ENCODE measurements at regions of chr1 and their contacts with region 1.

Region 1: DNA sequence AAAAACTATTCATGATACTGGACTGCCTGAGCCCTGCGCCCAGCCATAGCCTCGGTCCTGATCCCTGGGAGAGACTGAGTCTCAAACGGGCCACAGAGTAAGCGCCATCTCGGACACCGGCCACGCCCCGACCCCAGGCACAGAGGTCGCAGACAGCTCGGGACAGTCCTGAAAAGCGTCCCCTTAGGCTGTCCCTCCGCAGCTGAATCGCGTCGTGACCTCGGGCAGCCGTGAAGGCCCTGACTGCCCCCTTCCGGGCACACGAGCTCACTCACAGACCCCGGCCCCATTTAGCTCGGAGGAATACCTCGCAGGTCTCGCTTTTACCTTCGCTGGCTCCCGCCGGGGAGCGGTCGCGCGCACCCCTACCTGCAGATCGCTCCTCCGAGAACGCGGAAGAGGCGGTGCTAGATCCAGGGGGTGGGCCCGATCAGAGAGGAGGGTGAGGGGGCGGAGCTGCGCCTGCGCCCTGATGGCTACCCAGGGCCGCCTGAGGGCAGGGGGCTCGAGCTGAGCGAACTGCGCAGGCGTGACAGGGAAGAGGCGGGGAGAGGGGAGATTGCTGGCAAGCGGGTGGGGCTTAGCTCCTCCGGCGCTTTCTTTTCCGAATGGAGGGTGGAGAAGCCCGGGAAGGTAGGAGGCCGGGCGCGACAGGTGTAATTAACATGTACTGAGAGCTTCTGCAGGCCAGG is at the start of gene MKNK1:
- DNase-seq: peak; percentile 96 to 99 (median 99)
- ATAC-seq: peak; percentile 99
- H3K4me3 ChIP-seq: peak within 1 kb of the TSS; percentile 86
- H3K4me3 Mint-ChIP-seq: peak within 1 kb of the TSS; percentile 89 to 99 (median 94)
- H3K27ac ChIP-seq: peak within 1 kb of the TSS; percentile 75
- H3K27ac Mint-ChIP-seq: peak within 1 kb of the TSS; percentile 81 to 96 (median 93)
- H3K4me1 ChIP-seq: peaks cover 22 to 38% of the 10 kb centered on the region in 2 donors
- H3K4me1 Mint-ChIP-seq: peaks cover 53 to 76% (median 59%) of the 10 kb centered on the region in 7 donors
- H3K27me3 ChIP-seq: no peaks in the 10 kb centered on the region
- H3K27me3 Mint-ChIP-seq: no peaks in the 10 kb centered on the region
- total RNA-seq, gene MKNK1: 35.8 to 80.1 (median 54.1) TPM

Region 2: GRCh38 chr1:46247436-46248121 is 356.4 kb before region 1 on chr1 and contains the start of gene RAD54L:
- CTCF ChIA-PET with region 1: no interaction called
- POLR2A ChIA-PET with region 1: no interaction called
- intact Hi-C with region 1: loop called (anchors 1 to 5 kb)
- DNase-seq: peak; percentile 83 to 97 (median 95)
- ATAC-seq: peak; percentile 99
- H3K4me3 ChIP-seq: peak within 1 kb of the TSS; percentile 89
- H3K4me3 Mint-ChIP-seq: peak within 1 kb of the TSS; percentile 86 to 100 (median 94)
- H3K27ac ChIP-seq: peak within 1 kb of the TSS; percentile 66
- H3K27ac Mint-ChIP-seq: peak within 1 kb of the TSS; percentile 62 to 96 (median 78)
- H3K4me1 ChIP-seq: peaks cover 4 to 8% of the 10 kb centered on the region in 2 donors
- H3K4me1 Mint-ChIP-seq: peaks cover 0 to 41% (median 17%) of the 10 kb centered on the region in 7 donors
- H3K27me3 ChIP-seq: no peaks in the 10 kb centered on the region
- H3K27me3 Mint-ChIP-seq: no peaks in the 10 kb centered on the region
- total RNA-seq, gene RAD54L: 0.94 to 31.9 (median 2.1) TPM

Region 3: GRCh38 chr1:46413596-46413985 is 190.4 kb before region 1 on chr1:
- CTCF ChIA-PET with region 1: no interaction called
- POLR2A ChIA-PET with region 1: no interaction called
- intact Hi-C with region 1: no loop called
- DNase-seq: no peak
- ATAC-seq: peak; percentile 80
- H3K4me3 ChIP-seq: no peak overlapping the region
- H3K4me3 Mint-ChIP-seq: no peak overlapping the region
- H3K27ac ChIP-seq: no peak overlapping the region
- H3K27ac Mint-ChIP-seq: no peak overlapping the region
- H3K4me1 ChIP-seq: no peaks in the 10 kb centered on the region
- H3K4me1 Mint-ChIP-seq: no peaks in the 10 kb centered on the region
- H3K27me3 ChIP-seq: no peaks in the 10 kb centered on the region
- H3K27me3 Mint-ChIP-seq: no peaks in the 10 kb centered on the region

Region 4: DNA sequence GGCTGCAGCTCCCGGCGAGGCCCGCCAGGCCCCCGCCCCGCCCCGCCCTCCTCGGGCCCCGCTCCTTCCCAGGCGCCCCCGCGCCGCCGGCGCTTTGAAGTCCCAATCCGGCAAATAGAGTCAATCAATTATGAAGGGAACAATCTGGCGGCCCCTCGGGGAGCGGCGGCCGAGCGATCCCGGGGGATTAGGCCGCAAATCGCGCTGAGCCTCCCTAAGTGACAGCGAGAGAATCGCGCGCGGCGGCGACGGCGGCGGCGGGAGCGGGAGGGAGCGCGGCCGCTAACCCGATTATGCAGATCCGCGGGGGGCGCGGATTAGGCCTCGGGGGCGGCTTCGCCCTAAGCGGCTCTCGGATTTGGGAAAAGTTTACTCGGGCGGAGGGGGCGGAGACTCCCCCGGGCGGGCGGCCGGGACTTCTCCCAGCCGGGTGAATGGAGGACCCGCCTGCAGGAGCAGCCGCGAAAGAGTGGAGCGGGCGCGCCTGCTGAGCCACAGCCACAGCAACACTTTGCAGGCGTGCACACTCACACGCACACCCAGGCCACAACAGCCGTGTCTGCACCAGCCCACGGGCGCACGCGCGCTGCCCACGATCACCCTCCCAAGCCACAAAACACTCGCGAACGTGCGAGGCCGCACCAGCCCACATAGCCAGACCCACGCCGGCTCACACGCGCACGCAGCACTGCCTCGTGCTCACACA is 137.4 kb before region 1 on chr1:
- CTCF ChIA-PET with region 1: no interaction called
- POLR2A ChIA-PET with region 1: no interaction called
- intact Hi-C with region 1: no loop called
- DNase-seq: peak in 1 of 9 donors; percentile 7
- ATAC-seq: peak; percentile 33
- H3K4me3 ChIP-seq: peak overlapping the region; percentile 16
- H3K4me3 Mint-ChIP-seq: peak overlapping the region; percentile 58 to 84 (median 79)
- H3K27ac ChIP-seq: no peak overlapping the region
- H3K27ac Mint-ChIP-seq: no peak overlapping the region
- H3K4me1 ChIP-seq: peaks cover 0 to 5% of the 10 kb centered on the region in 2 donors
- H3K4me1 Mint-ChIP-seq: peaks cover 6 to 14% (median 10%) of the 10 kb centered on the region in 7 donors
- H3K27me3 ChIP-seq: no peaks in the 10 kb centered on the region
- H3K27me3 Mint-ChIP-seq: peaks cover 33 to 76% (median 55%) of the 10 kb centered on the region in 5 donors

Region 5: GRCh38 chr1:46527474-46528296 is 76.3 kb before region 1 on chr1:
- CTCF ChIA-PET with region 1: no interaction called
- POLR2A ChIA-PET with region 1: interaction called, 10 read pairs
- intact Hi-C with region 1: loop called in 1 of 2 experiments (anchors 5 kb)
- DNase-seq: peak; percentile 34 to 81 (median 57)
- ATAC-seq: peak; percentile 79
- H3K4me3 ChIP-seq: no peak overlapping the region
- H3K4me3 Mint-ChIP-seq: peak overlapping the region in 1 of 10 donors; percentile 34
- H3K27ac ChIP-seq: no peak overlapping the region
- H3K27ac Mint-ChIP-seq: peak overlapping the region in 1 of 9 donors; percentile 34
- H3K4me1 ChIP-seq: peaks cover 3 to 5% of the 10 kb centered on the region in 2 donors
- H3K4me1 Mint-ChIP-seq: peaks cover 0 to 20% (median 6%) of the 10 kb centered on the region in 7 donors
- H3K27me3 ChIP-seq: no peaks in the 10 kb centered on the region
- H3K27me3 Mint-ChIP-seq: peaks cover 16 to 35% (median 31%) of the 10 kb centered on the region in 5 donors

Region 6: DNA sequence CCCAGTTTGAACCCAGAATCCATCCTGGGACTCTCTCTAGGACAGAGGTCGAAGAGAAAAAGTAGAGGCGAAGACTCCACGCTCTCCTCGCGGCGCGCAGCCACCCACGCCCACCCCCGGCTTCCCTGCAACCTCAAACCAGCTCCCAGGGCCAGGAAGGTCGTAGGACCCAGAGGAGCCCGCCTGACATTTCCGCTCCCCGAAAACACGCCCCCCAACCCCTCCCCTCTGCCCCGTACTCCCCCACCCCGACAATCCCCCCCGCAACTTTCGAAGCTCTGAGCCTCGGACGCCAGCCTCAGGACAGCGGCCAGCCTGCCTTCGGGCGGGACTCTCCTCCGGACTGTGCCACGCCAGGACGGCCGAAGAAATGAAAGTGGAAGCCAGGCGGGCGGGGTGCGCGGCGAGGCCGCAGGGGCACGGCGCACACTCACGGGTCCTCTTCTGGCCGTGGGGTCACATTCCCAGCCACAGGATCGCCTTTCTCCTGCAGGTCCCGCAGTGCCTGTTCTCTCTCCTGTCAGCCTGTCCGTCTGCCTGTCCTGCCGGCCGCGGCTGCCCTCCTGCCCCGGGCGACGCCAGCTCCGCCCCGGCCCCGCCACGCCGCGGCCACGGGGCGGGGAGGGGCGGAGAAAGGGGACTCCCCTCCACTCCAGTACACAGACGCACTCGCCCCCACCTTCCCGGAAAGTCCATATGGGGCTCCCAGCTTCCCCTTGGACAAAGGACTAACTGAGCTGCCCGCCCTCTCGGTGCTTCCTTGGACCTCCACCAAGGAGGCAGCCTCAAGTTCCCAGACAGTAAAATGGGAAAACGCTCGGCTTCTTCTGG is 12.5 kb after region 1 on chr1 and contains the start of gene MOB3C:
- CTCF ChIA-PET with region 1: interaction called, 6 read pairs
- POLR2A ChIA-PET with region 1: interaction called, 110 read pairs
- intact Hi-C with region 1: loop called (anchors 1 kb)
- DNase-seq: peak; percentile 41 to 79 (median 62)
- ATAC-seq: peak; percentile 83
- H3K4me3 ChIP-seq: peak within 1 kb of the TSS; percentile 74
- H3K4me3 Mint-ChIP-seq: peak within 1 kb of the TSS; percentile 90 to 96 (median 93)
- H3K27ac ChIP-seq: peak within 1 kb of the TSS; percentile 94
- H3K27ac Mint-ChIP-seq: peak within 1 kb of the TSS; percentile 88 to 96 (median 93)
- H3K4me1 ChIP-seq: peaks cover 31 to 34% of the 10 kb centered on the region in 2 donors
- H3K4me1 Mint-ChIP-seq: peaks cover 14 to 68% (median 51%) of the 10 kb centered on the region in 7 donors
- H3K27me3 ChIP-seq: no peaks in the 10 kb centered on the region
- H3K27me3 Mint-ChIP-seq: no peaks in the 10 kb centered on the region
- total RNA-seq, gene MOB3C: 12.1 to 25.8 (median 25.2) TPM

Region 7: DNA sequence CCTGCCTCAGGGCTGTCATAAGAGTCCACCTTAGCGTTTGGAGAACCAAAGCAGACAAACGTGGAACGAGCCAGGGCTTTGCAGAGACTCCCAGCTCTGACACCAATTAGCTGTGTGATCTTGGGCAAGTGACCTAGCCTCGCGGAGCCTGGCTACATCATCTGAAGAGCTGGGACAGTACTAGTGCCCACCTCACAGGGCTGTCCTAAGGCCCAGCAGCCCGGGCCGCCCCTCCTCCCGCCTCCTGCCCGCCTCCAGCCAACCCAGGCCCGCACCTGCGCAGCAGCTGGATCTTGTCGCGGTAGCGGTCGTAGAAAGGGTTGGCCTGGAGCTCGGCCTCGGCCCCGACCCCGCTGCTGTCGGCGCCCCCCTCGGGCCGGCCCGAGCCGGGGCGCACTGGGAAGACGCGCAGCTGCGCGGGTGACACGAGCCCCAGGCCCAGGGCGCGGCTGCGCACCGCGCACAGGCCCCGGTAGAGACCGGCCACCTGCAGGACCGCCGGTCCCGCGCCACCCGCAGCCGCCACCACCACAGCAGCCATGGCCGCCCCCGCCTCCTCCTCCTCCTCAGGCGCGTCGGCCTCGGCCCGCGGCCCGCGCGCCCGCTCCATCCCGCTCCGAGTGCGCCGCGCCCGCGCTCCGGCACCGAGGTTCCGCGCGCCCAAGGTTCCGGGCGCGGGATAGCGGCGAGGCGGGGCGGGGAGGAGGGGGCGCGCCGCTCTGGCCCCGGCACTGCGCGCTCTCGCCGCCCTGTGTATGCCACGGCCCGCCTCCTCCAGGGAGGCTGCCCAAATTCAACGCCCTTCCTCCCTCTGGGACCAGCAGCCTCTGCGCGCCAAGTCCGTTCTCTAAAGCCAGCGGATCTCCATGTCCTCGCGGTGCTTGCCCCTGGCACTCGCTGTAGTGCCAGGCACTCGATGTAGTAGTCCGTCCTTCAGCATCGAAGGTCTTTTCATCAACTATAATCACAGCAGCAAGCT is 64.1 kb after region 1 on chr1 and contains the start of gene ATPAF1:
- CTCF ChIA-PET with region 1: interaction called, 7 read pairs
- POLR2A ChIA-PET with region 1: interaction called, 4 read pairs
- intact Hi-C with region 1: loop called (anchors 1 to 2 kb)
- DNase-seq: peak; percentile 41 to 76 (median 69)
- ATAC-seq: peak; percentile 92
- H3K4me3 ChIP-seq: peak within 1 kb of the TSS; percentile 62
- H3K4me3 Mint-ChIP-seq: peak within 1 kb of the TSS in 8 of 10 donors; percentile 77 to 89 (median 87)
- H3K27ac ChIP-seq: peak within 1 kb of the TSS; percentile 74
- H3K27ac Mint-ChIP-seq: peak within 1 kb of the TSS; percentile 16 to 89 (median 68)
- H3K4me1 ChIP-seq: peaks cover 12 to 21% of the 10 kb centered on the region in 2 donors
- H3K4me1 Mint-ChIP-seq: peaks cover 16 to 30% (median 25%) of the 10 kb centered on the region in 7 donors
- H3K27me3 ChIP-seq: no peaks in the 10 kb centered on the region
- H3K27me3 Mint-ChIP-seq: no peaks in the 10 kb centered on the region
- total RNA-seq, gene ATPAF1: 17.3 to 49.5 (median 28.6) TPM

Region 8: DNA sequence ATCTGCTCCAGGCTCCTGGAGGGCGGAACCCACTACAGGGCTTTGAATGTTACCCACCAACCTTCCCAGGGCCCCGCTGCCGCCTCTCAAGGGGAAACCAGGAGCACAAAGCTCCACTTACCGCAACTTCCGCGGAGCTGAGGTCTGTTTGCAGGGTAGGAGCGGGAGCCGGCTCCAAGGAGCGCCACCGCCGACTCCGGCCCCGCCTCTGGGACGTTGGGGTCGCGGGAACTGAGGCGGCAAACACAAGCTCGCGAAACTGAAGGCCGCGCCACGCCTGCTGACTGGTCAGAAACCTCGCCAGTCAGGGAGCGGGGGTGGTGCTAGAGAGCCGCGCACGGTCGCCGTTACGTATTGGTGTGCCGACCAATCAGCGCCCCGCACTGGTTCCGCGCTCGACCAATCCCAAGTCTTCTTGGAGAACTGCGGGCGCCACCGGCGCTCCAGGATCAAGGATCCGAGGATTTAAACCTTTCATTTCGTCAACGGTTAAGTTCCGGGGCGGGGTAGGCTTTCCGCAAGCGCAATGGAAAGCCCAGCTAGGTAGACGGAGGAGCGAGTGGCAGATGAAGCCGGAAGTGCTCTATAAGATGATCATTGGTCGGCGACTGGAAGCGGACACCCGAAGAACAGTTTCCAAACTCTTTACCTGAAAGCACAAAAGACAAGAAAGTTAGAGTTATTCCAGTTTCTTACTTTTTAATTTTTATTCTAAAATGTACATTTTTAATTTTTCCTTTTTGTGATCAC is 710.1 kb after region 1 on chr1 and contains the start of gene STIL:
- CTCF ChIA-PET with region 1: no interaction called
- POLR2A ChIA-PET with region 1: interaction called, 5 read pairs
- intact Hi-C with region 1: loop called in 1 of 2 experiments (anchors 10 kb)
- DNase-seq: peak; percentile 87 to 96 (median 95)
- ATAC-seq: peak; percentile 98
- H3K4me3 ChIP-seq: peak within 1 kb of the TSS; percentile 73
- H3K4me3 Mint-ChIP-seq: peak within 1 kb of the TSS; percentile 84 to 98 (median 93)
- H3K27ac ChIP-seq: peak within 1 kb of the TSS; percentile 78
- H3K27ac Mint-ChIP-seq: peak within 1 kb of the TSS; percentile 88 to 98 (median 95)
- H3K4me1 ChIP-seq: no peaks in the 10 kb centered on the region
- H3K4me1 Mint-ChIP-seq: peaks cover 4 to 26% (median 13%) of the 10 kb centered on the region in 7 donors
- H3K27me3 ChIP-seq: no peaks in the 10 kb centered on the region
- H3K27me3 Mint-ChIP-seq: peaks cover 0 to 3% (median 0%) of the 10 kb centered on the region in 5 donors
- total RNA-seq, gene STIL: 1.3 to 28.5 (median 1.9) TPM